ENCODE measurements at regions of chr20 and their contacts with region 1.

Region 1: DNA sequence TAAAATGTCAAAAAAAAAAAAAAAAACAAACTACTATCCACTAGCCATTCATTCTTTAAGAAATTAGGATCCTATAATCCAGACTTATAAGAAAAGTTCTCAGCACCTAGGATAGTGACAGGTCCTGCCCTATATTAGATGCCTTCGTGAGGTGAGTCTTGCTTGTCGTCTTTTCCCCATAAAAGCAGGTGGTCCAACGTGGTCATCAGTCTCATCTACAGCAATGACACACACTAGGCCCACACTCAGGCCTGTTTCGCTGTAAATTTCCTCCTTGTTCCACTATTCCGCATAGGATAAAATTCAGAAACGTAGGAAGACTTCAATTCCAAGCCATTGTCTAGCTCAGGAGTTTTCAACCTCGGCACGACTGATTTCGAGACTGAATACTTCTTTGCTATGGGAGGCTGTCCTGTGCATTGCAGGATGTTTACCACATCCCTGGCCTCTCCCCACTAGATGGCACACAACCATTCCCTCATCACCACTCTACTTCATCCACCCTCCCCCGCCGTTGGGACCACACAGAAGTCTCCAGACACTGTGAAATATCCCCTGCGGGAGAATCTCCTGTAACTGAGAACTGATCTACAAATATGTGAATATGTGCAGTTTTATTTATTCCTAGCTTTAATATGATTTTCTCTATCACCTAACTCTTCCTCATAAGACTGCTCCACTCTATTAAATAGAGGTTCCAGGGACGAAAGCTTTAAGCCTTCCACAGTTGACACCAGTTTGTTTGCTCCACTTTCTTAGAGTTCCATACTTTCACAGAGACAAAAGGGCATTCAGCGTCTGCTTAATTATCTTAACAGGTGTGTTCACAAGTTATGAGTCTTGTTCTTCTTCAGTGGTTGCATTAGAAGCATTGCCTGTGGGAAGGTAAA is 346.3 kb downstream of the BMP2 start:
- DNase-seq: peak; percentile 40 to 65 (median 51)
- ATAC-seq: peak; percentile 83 to 98 (median 94)
- H3K4me3 ChIP-seq: no peak overlapping the region
- H3K27ac ChIP-seq: no peak overlapping the region
- H3K4me1 ChIP-seq: no peaks in the 10 kb centered on the region
- H3K27me3 ChIP-seq: no peaks in the 10 kb centered on the region
- CTCF ChIP-seq: peak; percentile 37 to 68 (median 50)
- POLR2A ChIP-seq: no peak

Region 2: DNA sequence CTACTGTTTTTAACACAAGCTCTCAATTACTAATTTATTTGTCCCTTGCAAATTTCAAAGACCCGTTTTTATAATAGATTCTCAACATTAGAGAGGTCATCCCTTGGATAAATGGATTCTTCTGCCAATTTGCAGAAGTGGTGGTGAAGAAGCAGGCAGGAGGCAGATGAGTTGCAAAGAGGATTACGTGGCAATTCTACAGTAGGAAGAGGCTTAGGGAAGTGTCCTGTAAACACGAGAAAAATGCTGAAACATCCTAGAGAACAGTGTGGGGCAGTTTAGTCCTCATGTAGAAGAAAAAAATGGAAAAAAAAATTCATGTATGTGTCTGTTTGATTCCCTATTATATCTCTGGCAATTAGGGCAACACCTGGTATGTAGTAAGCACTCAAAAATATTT is 258.7 kb before region 1 on chr20:
- intact Hi-C with region 1: no loop called
- DNase-seq: no peak
- ATAC-seq: no peak
- H3K4me3 ChIP-seq: no peak overlapping the region
- H3K27ac ChIP-seq: no peak overlapping the region
- H3K4me1 ChIP-seq: peaks cover 0 to 8% (median 0%) of the 10 kb centered on the region in 12 donors
- H3K27me3 ChIP-seq: peaks cover 0 to 3% (median 0%) of the 10 kb centered on the region in 9 donors
- CTCF ChIP-seq: no peak
- POLR2A ChIP-seq: no peak

Region 3: DNA sequence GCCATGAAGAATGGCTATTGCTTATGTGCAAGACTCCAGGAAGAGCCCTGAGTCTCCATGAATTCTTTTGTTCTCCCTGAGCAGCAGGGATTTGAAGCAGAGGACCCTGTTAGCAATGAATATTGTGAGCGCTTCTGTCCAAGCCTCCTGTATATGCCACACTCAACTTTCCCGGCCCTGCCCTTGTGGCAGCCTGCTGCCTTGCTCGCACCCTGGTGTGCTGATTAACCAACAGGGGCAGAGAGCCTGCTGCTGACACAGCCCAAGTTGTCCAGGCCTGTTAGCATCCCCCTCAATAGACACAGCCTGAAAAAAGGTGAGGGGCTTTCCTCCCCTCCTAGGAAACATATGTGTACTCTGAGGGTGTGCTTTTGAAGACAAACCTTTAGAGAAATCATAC is 214.9 kb before region 1 on chr20:
- intact Hi-C with region 1: no loop called
- DNase-seq: no peak
- ATAC-seq: no peak
- H3K4me3 ChIP-seq: no peak overlapping the region
- H3K27ac ChIP-seq: no peak overlapping the region
- H3K4me1 ChIP-seq: no peaks in the 10 kb centered on the region
- H3K27me3 ChIP-seq: no peaks in the 10 kb centered on the region
- CTCF ChIP-seq: no peak
- POLR2A ChIP-seq: no peak

Region 4: GRCh38 chr20:7161690-7162089 is 47.9 kb after region 1 on chr20:
- intact Hi-C with region 1: loop called in 5 of 10 experiments (anchors 2 to 5 kb)
- DNase-seq: no peak
- ATAC-seq: no peak
- H3K4me3 ChIP-seq: no peak overlapping the region
- H3K27ac ChIP-seq: no peak overlapping the region
- H3K4me1 ChIP-seq: no peaks in the 10 kb centered on the region
- H3K27me3 ChIP-seq: no peaks in the 10 kb centered on the region
- CTCF ChIP-seq: peak in 9 of 12 donors; percentile 10 to 57 (median 39)
- POLR2A ChIP-seq: no peak

Region 5: GRCh38 chr20:7272512-7272911 is 158.7 kb after region 1 on chr20:
- intact Hi-C with region 1: loop called in 2 of 10 experiments (anchors 5 kb)
- DNase-seq: no peak
- ATAC-seq: no peak
- H3K4me3 ChIP-seq: no peak overlapping the region
- H3K27ac ChIP-seq: no peak overlapping the region
- H3K4me1 ChIP-seq: no peaks in the 10 kb centered on the region
- H3K27me3 ChIP-seq: peaks cover 0 to 5% (median 0%) of the 10 kb centered on the region in 9 donors
- CTCF ChIP-seq: peak in 9 of 12 donors; percentile 7 to 47 (median 25)
- POLR2A ChIP-seq: no peak

Region 6: DNA sequence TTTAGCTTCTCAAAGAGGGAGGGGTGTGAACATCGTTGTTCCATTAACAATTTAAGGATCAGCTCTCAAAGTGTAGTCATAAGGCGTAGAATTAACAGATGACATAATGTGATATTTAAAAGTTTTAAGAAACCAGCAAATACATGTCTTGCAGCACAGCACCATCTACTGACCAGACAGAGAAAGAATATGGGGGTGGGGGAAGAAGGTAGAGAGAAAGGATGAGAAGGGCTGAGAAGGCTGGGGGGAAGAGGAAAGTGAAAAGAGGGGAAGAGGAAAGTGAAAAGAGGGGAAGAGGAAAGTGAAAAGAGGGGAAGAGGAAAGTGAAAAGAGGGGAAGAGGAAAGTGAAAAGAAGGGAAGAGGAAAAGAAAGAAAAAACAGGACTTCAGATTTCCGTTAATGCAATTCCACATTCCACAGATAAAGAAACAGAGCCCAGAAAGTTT is 745.6 kb after region 1 on chr20:
- intact Hi-C with region 1: loop called in 2 of 10 experiments (anchors 5 to 10 kb)
- DNase-seq: peak in 2 of 5 donors; percentile 22 to 29
- ATAC-seq: peak; percentile 55 to 86 (median 74)
- H3K4me3 ChIP-seq: no peak overlapping the region
- H3K27ac ChIP-seq: no peak overlapping the region
- H3K4me1 ChIP-seq: peaks cover 0 to 7% (median 4%) of the 10 kb centered on the region in 12 donors
- H3K27me3 ChIP-seq: peaks cover 0 to 5% (median 0%) of the 10 kb centered on the region in 9 donors
- CTCF ChIP-seq: peak; percentile 17 to 68 (median 56)
- POLR2A ChIP-seq: no peak

Measured in heart left ventricle (tissue), 16 donors.